ENCODE measurements at regions of chr1 and their contacts with region 1.

Region 1: GRCh38 chr1:21289700-21290545 is at the start of gene ECE1:
- H3K4me3 Mint-ChIP-seq: peak within 1 kb of the TSS; percentile 77
- H3K27ac Mint-ChIP-seq: peak within 1 kb of the TSS; percentile 73
- H3K4me1 Mint-ChIP-seq: peaks cover 64% of the 10 kb centered on the region
- H3K27me3 Mint-ChIP-seq: peaks cover 40% of the 10 kb centered on the region

Region 2: GRCh38 chr1:21334214-21335087 is 44.5 kb after region 1 on chr1:
- intact Hi-C with region 1: loop called (anchors 5 kb)
- H3K4me3 Mint-ChIP-seq: peak overlapping the region; percentile 62
- H3K27ac Mint-ChIP-seq: peak overlapping the region; percentile 73
- H3K4me1 Mint-ChIP-seq: peaks cover 58% of the 10 kb centered on the region
- H3K27me3 Mint-ChIP-seq: peaks cover 67% of the 10 kb centered on the region

Region 3: DNA sequence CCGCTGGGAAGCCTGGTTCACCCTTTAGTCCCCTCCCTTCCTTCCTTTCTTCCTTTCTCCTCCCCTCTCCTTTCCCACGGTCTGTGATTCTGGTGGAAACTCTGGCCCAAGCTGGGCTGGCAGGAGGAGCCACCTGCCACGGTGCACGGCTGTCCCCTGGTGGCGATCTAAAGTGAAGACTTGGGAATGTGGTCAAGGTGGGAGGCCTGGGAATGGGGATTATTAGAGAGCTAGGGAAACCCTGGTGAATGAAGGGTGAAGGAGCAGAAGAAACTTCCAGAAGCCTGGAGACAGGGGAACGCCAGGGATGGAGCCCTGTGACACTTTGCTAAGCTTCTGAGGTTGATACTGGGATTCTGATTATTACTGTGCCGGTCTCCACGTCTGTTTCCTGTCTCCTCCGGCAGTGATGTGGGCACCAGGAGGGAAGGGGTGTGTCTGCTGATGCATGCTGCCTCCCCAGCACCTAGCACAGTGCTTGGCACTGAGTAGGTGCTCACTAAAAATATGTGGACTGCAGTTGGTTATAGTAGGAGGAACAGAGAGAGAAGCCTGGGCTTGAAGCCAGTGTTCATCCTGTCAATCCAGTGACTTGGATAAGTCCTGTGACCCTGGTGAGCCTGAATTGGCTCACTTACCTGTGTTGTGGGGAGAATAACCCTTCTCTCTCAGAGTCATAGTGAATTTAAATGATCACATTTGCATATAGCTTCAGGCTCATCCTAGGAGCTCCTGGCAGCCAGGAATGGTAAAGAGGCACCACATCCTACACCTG is 78.8 kb after region 1 on chr1:
- intact Hi-C with region 1: no loop called
- H3K4me3 Mint-ChIP-seq: no peak overlapping the region
- H3K27ac Mint-ChIP-seq: no peak overlapping the region
- H3K4me1 Mint-ChIP-seq: peaks cover 15% of the 10 kb centered on the region
- H3K27me3 Mint-ChIP-seq: peaks cover 52% of the 10 kb centered on the region